ENCODE measurements at regions of chr13 and their contacts with region 1.

Region 1: GRCh38 chr13:94595950-94596574 is at the start of gene TGDS:
- DNase-seq: peak; percentile 91
- H3K4me3 ChIP-seq: peak within 1 kb of the TSS; percentile 81 to 96
- H3K27ac ChIP-seq: peak within 1 kb of the TSS; percentile 55 to 87; a peak in 3 of 4 replicates
- H3K4me1 ChIP-seq: peaks cover 0 to 14% of the 10 kb centered on the region in 2 experiments; a peak in 3 of 4 replicates
- H3K27me3 ChIP-seq: no peaks in the 10 kb centered on the region
- CTCF ChIP-seq: no peak
- EP300 ChIP-seq: peak; percentile 11 to 38; a peak in 1 of 4 replicates
- RAD21 ChIP-seq: 0 out of 2 replicates have a peak, but pooled peaks have one; percentile 5
- polyA plus RNA-seq, gene TGDS: 8.2 and 12.2 TPM in 2 replicates

Region 2: DNA sequence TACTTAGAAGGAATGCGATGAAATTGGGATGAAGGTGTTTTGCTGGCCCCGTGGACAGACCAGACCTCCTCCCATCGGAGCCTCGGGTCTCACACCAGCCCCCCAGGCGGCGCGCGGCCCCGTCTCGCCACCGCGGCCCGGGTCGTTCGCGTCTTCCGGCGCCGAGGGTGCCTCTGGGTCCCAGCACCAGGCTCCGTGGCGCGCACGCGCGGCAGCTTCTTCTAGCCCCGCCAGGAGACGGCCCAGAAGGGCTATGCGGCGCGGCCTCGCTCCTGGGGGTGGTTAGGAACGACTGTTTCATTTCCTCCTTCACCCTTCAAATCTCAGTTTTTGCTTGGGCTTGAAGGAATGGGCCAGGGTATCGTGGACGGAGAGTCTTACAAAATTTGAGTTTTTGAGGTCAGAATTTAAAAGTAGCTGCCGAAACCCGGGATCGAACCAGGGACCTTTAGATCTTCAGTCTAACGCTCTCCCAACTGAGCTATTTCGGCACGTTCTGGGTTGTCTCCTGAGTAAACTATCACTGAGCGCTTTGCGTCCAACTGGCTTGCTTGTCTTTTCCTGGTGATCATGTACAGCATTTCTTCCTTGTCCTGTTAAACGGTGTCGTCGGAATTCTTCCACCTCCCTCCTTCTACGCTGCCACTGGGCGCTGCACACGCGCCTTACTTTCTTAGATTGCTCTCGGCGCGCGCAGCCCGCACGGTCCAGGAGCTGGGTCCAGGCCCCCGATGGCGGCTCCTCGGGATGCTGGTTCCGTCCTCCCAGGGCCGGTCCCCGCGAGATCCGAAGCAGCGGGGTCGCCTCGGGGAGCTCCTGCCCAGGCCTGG is 46.6 kb before region 1 on chr13:
- CTCF ChIA-PET with region 1: no interaction called
- POLR2A ChIA-PET with region 1: interaction called, 22 read pairs
- DNase-seq: peak; percentile 93
- H3K4me3 ChIP-seq: peak overlapping the region; percentile 69 to 81
- H3K27ac ChIP-seq: peak overlapping the region; percentile 83 to 98
- H3K4me1 ChIP-seq: peaks cover 5 to 12% of the 10 kb centered on the region in 2 experiments; a peak in 2 of 4 replicates
- H3K27me3 ChIP-seq: no peaks in the 10 kb centered on the region
- CTCF ChIP-seq: no peak
- EP300 ChIP-seq: no peak; a peak in 1 of 4 replicates
- RAD21 ChIP-seq: no peak

Region 3: GRCh38 chr13:94623316-94623715 is 27.3 kb after region 1 on chr13:
- CTCF ChIA-PET with region 1: no interaction called
- POLR2A ChIA-PET with region 1: no interaction called
- DNase-seq: no peak
- H3K4me3 ChIP-seq: no peak overlapping the region
- H3K27ac ChIP-seq: no peak overlapping the region
- H3K4me1 ChIP-seq: no peaks in the 10 kb centered on the region
- H3K27me3 ChIP-seq: no peaks in the 10 kb centered on the region
- CTCF ChIP-seq: no peak
- EP300 ChIP-seq: no peak
- RAD21 ChIP-seq: no peak